Psoas muscle (tissue), 8 donors: ENCODE measurements at regions of chr4 and their contacts with region 1.

Region 1: DNA sequence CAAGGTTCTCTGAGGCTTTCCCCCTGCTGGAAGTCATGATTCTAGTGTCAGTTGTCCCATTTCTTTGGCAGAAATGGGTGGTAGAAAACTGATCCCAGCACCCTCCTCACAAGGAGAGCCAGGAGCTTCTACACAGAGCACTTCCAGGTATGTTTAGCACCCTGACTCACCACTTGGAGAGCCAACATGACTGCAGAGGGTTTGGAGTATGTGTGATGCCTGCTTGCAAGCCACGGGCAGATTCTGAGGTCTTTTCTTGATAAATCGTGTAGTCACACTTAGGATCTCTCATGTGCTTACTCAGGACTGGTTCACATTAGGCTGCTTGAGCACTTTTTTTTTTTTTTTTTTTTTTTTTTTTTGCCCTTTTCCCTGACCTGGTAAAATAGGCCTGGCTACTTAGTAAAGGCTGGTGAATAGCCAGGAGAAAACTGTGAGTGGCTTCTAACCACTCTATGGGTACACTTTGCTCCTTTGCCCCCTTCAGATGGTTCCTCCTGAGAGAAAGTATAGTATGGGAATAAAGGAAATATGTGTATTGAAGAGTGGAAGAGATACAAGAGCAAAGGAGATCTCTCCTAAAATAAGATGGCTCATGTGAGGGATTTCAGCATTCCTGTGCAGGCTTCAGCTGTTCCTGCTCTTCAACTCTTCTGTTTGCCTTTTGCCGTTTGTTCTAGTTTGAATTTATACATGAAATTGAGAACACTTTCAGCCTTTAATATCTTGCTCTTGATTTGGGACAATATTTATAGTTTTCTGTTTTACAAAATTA is 103.6 kb downstream of the EMCN start:
- DNase-seq: peak; percentile 14 to 56
- ATAC-seq: peak; percentile 98 to 99 (median 98)
- H3K4me3 ChIP-seq: no peak overlapping the region
- H3K27ac ChIP-seq: peak overlapping the region; percentile 77
- H3K4me1 ChIP-seq: peaks cover 26% of the 10 kb centered on the region
- H3K27me3 ChIP-seq: no peaks in the 10 kb centered on the region
- CTCF ChIP-seq: no peak

Region 2: GRCh38 chr4:100306018-100306417 is 108.2 kb before region 1 on chr4:
- intact Hi-C with region 1: loop called in 1 of 2 experiments (anchors 5 kb)
- DNase-seq: no peak
- ATAC-seq: peak in 2 of 4 donors; percentile 11 to 21
- H3K4me3 ChIP-seq: no peak overlapping the region
- H3K27ac ChIP-seq: peak overlapping the region; percentile 62
- H3K4me1 ChIP-seq: peaks cover 37% of the 10 kb centered on the region
- H3K27me3 ChIP-seq: no peaks in the 10 kb centered on the region
- CTCF ChIP-seq: no peak

Region 3: DNA sequence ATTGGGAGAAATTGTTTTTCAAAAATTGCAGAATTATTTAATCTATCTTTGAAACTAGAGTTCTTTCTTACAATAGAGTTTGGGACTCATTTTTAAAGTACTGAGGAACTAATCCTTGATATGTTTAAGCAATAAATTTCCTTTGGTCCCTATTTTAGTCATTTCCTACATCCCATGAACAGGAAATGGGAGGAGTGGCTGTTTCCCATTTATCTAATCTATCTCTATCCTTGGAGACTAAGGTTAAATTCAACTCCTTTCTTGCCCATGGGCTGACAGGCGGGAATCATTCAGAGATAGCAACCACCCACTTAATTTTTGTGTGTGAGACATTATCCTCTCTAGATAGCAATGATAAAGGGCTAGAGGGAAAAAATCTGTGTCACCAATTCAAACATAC is 235.2 kb after region 1 on chr4:
- intact Hi-C with region 1: no loop called
- DNase-seq: no peak
- ATAC-seq: no peak
- H3K4me3 ChIP-seq: no peak overlapping the region
- H3K27ac ChIP-seq: no peak overlapping the region
- H3K4me1 ChIP-seq: no peaks in the 10 kb centered on the region
- H3K27me3 ChIP-seq: no peaks in the 10 kb centered on the region
- CTCF ChIP-seq: no peak